Psoas muscle (tissue), 8 donors: ENCODE measurements at regions of chr4 and their contacts with region 1.

Region 1: DNA sequence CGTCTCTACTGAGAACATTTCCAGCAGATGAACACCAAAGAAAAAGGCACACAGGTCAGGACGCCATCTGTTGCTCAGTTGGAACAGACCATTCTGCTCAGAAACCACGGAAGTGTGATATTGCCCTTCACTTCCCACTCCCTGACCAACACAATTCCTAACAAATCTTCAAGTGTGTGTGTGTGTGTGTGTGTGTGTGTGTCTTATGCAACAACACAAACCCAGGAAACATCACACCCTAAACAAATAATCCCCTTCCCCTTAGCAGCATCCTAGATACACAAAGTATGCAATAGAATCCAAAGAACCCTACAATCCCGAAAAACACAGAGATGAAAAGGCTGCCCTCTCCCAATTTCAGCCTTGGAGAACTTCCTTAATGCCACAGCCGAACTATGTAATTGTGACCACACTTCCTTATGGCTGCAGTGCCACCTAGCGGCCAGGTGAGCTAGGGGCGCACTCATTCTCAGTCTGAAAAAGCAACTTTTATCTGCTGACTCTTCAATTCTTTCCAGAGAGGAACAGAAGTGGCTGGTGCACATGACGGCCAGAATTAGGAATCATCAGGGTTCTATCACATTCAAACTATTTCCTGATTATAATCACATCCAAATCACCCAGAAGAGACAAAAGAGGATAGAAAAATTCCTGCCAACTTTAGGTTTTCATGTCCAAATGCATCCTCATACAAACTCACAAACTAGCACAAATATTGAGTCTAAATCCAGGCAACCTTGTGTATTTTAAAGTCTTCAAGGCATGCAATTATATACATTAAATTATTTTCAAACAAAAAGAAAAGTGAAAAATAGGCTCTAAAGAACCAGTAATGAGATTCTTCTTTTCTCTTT is 164.9 kb downstream of the DHX15 start:
- DNase-seq: peak; percentile 75 to 87
- ATAC-seq: peak; percentile 79 to 89 (median 86)
- H3K4me3 ChIP-seq: no peak overlapping the region
- H3K27ac ChIP-seq: no peak overlapping the region
- H3K4me1 ChIP-seq: peaks cover 9% of the 10 kb centered on the region
- H3K27me3 ChIP-seq: no peaks in the 10 kb centered on the region
- CTCF ChIP-seq: peak; percentile 92

Region 2: GRCh38 chr4:23135792-23136645 is 1283.4 kb before region 1 on chr4:
- intact Hi-C with region 1: loop called in 1 of 2 experiments (anchors 5 kb)
- DNase-seq: no peak
- ATAC-seq: peak in 2 of 4 donors; percentile 49 to 53
- H3K4me3 ChIP-seq: no peak overlapping the region
- H3K27ac ChIP-seq: no peak overlapping the region
- H3K4me1 ChIP-seq: no peaks in the 10 kb centered on the region
- H3K27me3 ChIP-seq: no peaks in the 10 kb centered on the region
- CTCF ChIP-seq: peak; percentile 83

Region 3: DNA sequence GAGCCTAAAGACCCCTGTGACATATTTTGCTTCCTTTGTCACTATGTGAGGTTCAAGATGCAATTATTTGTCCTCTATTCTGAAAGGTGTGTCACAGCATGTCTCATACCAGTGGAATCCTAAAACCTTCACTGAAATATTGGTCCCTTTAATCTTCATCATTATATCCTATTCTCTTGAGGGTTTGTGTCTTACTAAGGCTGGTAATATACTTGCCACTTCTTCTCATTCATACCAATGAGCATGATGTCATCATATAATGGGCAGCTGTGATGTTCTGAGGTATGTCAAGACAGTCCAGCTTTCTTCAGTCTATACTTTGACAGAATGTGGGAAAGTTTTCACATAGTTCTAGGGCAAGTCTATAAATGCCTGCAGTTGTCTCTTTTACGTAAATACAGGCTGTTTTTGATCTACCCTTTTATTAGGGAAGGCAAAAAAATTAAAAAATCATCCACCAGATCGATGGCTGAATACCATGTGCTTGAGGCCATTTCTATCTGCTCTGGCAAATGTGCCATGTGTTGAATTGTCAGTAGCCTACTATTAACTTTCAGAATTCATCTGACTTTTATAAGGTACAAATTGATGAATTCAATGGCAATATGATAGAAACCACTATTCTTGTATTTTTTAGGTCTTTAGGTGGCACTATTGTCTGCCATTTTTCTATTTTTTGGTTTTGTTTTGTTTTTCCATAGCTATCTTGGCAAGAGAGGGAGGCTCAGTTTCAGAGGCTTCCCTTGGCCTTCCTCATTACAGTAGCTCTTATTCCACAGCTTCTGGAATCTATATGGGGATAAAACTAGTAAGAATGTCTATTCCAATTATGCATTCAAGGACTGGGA is 738.5 kb before region 1 on chr4:
- intact Hi-C with region 1: loop called in 1 of 2 experiments (anchors 10 kb)
- DNase-seq: no peak
- ATAC-seq: no peak
- H3K4me3 ChIP-seq: no peak overlapping the region
- H3K27ac ChIP-seq: no peak overlapping the region
- H3K4me1 ChIP-seq: no peaks in the 10 kb centered on the region
- H3K27me3 ChIP-seq: no peaks in the 10 kb centered on the region
- CTCF ChIP-seq: peak; percentile 20

Region 4: GRCh38 chr4:23945451-23946017 is 473.9 kb before region 1 on chr4:
- intact Hi-C with region 1: loop called in 1 of 2 experiments (anchors 10 kb)
- DNase-seq: peak; percentile 62 to 75
- ATAC-seq: peak; percentile 85 to 92 (median 90)
- H3K4me3 ChIP-seq: no peak overlapping the region
- H3K27ac ChIP-seq: peak overlapping the region; percentile 61
- H3K4me1 ChIP-seq: peaks cover 9% of the 10 kb centered on the region
- H3K27me3 ChIP-seq: no peaks in the 10 kb centered on the region
- CTCF ChIP-seq: no peak

Region 5: GRCh38 chr4:24112466-24112865 is 306.9 kb before region 1 on chr4:
- intact Hi-C with region 1: no loop called
- DNase-seq: no peak
- ATAC-seq: no peak
- H3K4me3 ChIP-seq: no peak overlapping the region
- H3K27ac ChIP-seq: no peak overlapping the region
- H3K4me1 ChIP-seq: no peaks in the 10 kb centered on the region
- H3K27me3 ChIP-seq: no peaks in the 10 kb centered on the region
- CTCF ChIP-seq: no peak

Region 6: GRCh38 chr4:24244663-24245490 is 174.5 kb before region 1 on chr4:
- intact Hi-C with region 1: loop called in 1 of 2 experiments (anchors 5 kb)
- DNase-seq: peak; percentile 43 to 78
- ATAC-seq: peak; percentile 82 to 92 (median 90)
- H3K4me3 ChIP-seq: peak overlapping the region; percentile 22
- H3K27ac ChIP-seq: peak overlapping the region; percentile 80
- H3K4me1 ChIP-seq: peaks cover 33% of the 10 kb centered on the region
- H3K27me3 ChIP-seq: no peaks in the 10 kb centered on the region
- CTCF ChIP-seq: no peak

Region 7: DNA sequence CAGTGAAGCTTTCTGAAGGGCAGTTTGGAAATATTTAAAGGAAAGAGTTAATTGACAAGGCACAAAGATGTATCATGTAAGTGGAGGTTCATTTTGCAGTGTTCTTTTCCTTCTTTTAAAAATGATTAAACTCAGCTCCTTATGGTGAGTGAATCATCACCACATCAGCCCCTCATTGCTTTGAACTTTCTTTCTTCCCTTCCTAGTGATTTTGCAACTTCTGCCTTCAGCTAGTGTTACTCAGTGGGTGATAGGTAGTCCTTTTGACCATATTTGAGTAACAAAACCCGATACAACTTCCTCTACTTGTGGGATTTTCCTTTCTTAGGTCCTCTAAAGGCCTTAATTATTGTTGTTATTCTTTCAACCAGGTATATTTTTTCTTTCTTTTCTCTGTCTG is 901.4 kb after region 1 on chr4:
- intact Hi-C with region 1: no loop called
- DNase-seq: no peak
- ATAC-seq: no peak
- H3K4me3 ChIP-seq: no peak overlapping the region
- H3K27ac ChIP-seq: no peak overlapping the region
- H3K4me1 ChIP-seq: no peaks in the 10 kb centered on the region
- H3K27me3 ChIP-seq: no peaks in the 10 kb centered on the region
- CTCF ChIP-seq: no peak